Sigmoid colon (tissue), 7 donors: ENCODE measurements at regions of chr1 and their contacts with region 1.

Region 1: GRCh38 chr1:63828322-63829044 is 54.7 kb downstream of the ROR1 start:
- DNase-seq: no peak
- H3K4me3 ChIP-seq: no peak overlapping the region
- H3K27ac ChIP-seq: peak overlapping the region in 3 of 4 donors; percentile 66 to 75 (median 72)
- H3K4me1 ChIP-seq: peaks cover 0 to 69% (median 61%) of the 10 kb centered on the region in 4 donors
- H3K27me3 ChIP-seq: no peaks in the 10 kb centered on the region
- CTCF ChIP-seq: no peak
- EP300 ChIP-seq: no peak
- POLR2A ChIP-seq: no peak

Region 2: DNA sequence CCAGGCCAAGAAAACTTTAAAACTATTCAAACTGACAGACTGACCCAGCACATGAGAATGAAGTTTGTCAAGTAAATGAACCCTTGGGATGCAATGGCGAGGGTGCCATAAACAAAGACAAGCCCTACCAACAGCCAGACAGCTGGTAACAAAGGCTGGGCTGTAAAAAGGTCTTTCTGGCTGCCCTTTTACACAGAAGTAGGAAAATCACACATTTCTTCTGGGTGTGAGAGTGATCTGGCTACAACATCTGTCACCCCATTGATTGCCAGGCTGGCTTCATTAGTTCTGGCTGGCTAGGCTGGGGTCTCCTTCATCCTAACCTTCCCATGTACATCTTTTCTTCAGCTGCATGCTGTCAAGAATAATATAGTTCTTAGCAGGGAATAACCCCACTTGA is 589.8 kb before region 1 on chr1:
- intact Hi-C with region 1: no loop called
- DNase-seq: no peak
- H3K4me3 ChIP-seq: no peak overlapping the region
- H3K27ac ChIP-seq: no peak overlapping the region
- H3K4me1 ChIP-seq: no peaks in the 10 kb centered on the region
- H3K27me3 ChIP-seq: no peaks in the 10 kb centered on the region
- CTCF ChIP-seq: no peak
- EP300 ChIP-seq: no peak
- POLR2A ChIP-seq: no peak

Region 3: DNA sequence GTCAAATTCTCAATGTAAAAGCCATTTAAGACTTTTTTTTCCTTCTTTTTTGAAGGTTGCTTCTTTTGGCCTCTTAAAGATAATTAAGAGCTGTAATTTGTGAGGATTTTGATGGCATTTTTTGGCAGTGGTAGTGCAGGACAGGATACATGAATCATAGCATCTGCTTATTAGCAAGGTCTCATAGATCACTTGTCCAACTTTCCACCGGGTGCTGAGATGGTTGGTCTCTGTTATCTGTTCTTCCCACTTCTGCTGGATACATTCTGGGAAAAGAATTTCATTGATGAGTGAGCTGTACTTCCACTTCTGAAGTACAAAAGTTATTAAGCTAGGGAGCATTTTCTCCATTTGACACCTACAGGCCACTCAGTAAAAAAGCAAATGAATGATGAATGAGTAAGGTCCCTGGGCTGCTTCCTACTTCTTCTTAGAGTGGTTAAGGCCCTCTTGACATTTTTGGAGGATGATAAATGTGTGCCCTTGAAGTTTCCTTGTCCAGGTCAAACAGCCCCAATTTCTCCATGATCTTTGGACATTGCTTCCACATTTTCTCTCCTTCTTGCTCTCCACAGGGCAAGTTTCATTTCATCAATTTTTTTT is 45.9 kb after region 1 on chr1:
- intact Hi-C with region 1: loop called (anchors 5 kb)
- DNase-seq: no peak
- H3K4me3 ChIP-seq: no peak overlapping the region
- H3K27ac ChIP-seq: peak overlapping the region in 3 of 4 donors; percentile 41 to 69 (median 62)
- H3K4me1 ChIP-seq: peaks cover 0 to 85% (median 58%) of the 10 kb centered on the region in 4 donors
- H3K27me3 ChIP-seq: no peaks in the 10 kb centered on the region
- CTCF ChIP-seq: no peak
- EP300 ChIP-seq: no peak
- POLR2A ChIP-seq: no peak

Region 4: DNA sequence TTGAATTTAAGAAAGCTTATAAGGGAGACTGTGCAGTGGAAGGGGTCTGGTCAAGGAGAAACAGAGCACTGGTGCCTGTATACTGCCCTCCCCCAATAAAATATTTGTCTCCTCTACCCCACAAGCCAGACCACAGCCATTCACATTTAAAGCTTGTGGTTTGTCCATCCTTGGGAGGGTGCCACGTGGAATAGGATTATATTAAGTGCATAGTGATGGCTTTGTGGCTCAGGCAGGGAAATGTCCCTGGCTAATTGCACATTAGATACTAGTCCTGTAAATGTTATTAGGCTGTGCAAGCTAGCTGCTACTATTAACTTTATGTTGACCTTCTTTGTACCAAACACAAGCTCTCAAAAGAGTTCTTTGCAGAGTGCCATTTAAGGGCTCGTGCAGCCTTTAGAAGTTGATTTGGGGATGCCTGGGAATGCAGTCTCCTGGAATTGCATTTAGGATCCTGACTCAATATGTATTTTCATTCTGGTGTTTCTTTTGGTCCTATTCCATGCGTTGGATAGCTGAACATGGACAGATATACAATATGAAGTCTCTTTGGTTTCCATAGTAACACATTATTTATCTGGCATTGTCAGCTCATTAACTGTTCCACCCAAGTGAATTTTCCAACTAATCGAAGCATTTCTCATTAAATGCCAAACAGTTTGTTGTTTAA is 155.9 kb after region 1 on chr1:
- intact Hi-C with region 1: no loop called
- DNase-seq: no peak
- H3K4me3 ChIP-seq: no peak overlapping the region
- H3K27ac ChIP-seq: no peak overlapping the region
- H3K4me1 ChIP-seq: peaks cover 0 to 30% (median 21%) of the 10 kb centered on the region in 4 donors
- H3K27me3 ChIP-seq: no peaks in the 10 kb centered on the region
- CTCF ChIP-seq: no peak
- EP300 ChIP-seq: no peak
- POLR2A ChIP-seq: no peak